ENCODE measurements at regions of chr2 and their contacts with region 1.

Region 1: DNA sequence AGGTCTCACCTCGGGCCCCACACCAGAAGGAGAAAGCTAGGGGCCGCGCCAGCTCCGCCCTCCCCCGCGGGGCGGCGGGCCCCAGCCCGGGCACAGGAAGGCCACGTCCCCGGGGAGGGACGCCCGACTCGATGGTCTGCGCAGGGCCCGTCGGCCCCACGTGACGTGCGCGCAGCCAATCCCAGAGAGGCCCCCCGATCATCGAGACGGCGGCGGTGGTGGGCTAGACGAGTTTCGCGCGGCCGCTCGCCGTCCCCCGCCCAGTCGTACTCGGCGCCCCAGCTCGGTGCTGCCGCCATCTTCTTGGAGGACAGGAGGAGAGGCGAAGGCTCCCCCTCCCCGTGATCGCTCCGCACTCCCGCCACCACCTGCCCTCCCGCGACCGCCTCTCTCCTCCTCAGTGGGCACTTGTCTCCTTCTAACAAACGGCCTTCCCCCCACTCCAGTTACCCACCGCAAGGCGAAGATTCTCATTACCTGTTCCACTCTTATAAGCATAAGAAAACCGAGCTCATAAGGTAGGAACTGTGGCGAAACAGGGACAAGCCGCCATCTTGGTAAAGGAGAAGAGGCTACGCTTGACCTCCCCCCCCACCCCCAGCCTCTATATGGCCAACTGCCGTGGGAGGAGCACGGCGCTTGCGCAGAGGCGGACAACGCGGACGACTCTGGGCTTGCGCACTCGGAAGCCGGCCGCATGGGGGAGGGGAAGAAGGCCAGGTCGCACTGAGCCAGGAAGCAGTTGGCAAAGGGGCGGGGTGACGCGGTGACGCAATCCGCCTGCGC is at the start of gene HDLBP:
- DNase-seq: peak; percentile 93 to 98
- H3K4me3 ChIP-seq: peak within 1 kb of the TSS; percentile 72 to 100 (median 97)
- H3K27ac ChIP-seq: peak within 1 kb of the TSS; percentile 100
- H3K4me1 ChIP-seq: peaks cover 0 to 6% (median 1%) of the 10 kb centered on the region in 4 experiments; a peak in 2 of 7 replicates
- H3K27me3 ChIP-seq: no peaks in the 10 kb centered on the region
- CTCF ChIP-seq: peak; percentile 23 to 72 (median 51); a peak in 3 of 4 replicates
- EP300 ChIP-seq: peak in 1 of 2 experiments; percentile 5; a peak in 1 of 3 replicates
- POLR2A ChIP-seq: peak; percentile 66 to 73
- RAD21 ChIP-seq: no peak
- total RNA-seq, gene HDLBP: 329 and 360 TPM in 2 replicates

Region 2: DNA sequence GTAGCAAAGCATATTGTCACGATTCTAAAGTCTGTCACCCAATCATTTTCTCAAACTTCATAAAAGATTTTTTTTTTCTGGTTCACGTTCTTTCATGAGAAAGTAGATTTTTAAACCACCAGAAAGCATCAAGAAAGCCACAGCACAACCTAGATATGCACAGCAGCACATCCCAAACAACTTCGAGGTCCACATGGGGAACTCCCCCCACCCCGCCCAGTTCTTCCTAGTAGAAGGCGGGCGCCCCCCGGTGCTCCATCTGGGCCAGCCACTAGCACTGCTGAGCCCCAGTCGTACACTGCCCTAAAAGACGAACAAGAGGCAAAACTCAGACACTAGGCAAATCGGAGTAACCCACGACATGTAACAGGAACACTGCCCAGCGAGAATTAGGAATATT is 15.3 kb before region 1 on chr2:
- CTCF ChIA-PET with region 1: interaction called, 5 read pairs
- POLR2A ChIA-PET with region 1: interaction called, 47 read pairs
- DNase-seq: no peak
- H3K4me3 ChIP-seq: no peak overlapping the region
- H3K27ac ChIP-seq: no peak overlapping the region
- H3K4me1 ChIP-seq: peaks cover 0 to 3% (median 1%) of the 10 kb centered on the region in 4 experiments; a peak in 2 of 7 replicates
- H3K27me3 ChIP-seq: no peaks in the 10 kb centered on the region
- CTCF ChIP-seq: peak in 1 of 3 experiments; percentile 7; a peak in 1 of 4 replicates
- EP300 ChIP-seq: no peak
- POLR2A ChIP-seq: no peak
- RAD21 ChIP-seq: peak in 1 of 2 experiments; percentile 33; a peak in 2 of 4 replicates

Region 3: DNA sequence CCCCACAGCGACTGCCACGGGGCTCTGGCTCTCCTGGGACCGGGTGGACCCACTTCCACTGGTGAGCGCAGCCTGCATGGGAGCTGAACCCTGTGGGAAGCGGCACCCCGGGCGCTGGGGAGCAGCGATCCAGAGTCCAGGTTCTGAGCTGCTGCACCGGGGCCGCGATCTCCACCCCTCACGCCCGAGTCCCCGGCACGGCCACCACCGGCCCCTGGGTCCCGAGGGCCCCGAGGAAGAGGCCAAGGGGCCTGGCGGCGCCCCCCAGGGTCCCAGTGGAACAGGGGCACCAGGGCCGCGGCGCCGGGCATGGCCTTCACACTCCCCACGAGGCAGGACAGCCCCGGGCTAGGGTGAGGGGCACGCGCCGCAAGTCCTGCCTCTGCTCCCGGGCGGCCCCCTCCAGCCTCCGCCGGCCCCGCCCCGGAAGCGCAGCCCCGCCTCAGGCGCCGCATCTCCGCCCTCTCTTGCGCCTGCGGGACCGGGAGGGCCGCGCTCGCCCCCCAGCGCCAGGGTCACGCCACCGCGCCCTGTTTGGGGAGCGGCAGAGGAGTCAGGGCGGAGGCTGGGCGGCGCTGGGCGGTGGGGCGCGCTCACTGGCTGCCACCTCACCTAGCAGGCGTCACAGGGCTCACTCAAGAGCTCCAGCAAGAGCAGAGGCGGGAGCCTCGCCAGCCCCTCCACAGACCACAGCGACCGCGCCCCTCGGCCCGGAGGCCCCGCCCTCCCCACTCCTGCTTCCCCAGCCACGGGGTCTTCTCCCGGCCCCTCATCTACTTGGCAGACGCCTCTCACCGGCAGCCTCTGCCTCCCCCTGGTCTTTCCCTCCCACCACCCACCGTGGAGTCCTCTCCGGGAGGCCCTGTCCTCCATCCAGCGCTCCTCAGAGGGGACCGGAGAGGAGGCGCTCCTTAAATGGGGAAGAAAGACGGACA is 294.8 kb after region 1 on chr2:
- CTCF ChIA-PET with region 1: no interaction called
- POLR2A ChIA-PET with region 1: interaction called, 10 read pairs
- DNase-seq: peak; percentile 80 to 96
- H3K4me3 ChIP-seq: peak overlapping the region; percentile 38 to 66 (median 60)
- H3K27ac ChIP-seq: peak overlapping the region; percentile 73; the same call in 1 of the 2 replicates
- H3K4me1 ChIP-seq: no peaks in the 10 kb centered on the region
- H3K27me3 ChIP-seq: no peaks in the 10 kb centered on the region
- CTCF ChIP-seq: peak; percentile 72 to 81 (median 79)
- EP300 ChIP-seq: peak in 1 of 2 experiments; percentile 89; a peak in 1 of 3 replicates
- POLR2A ChIP-seq: peak; percentile 43 to 62; a peak in 2 of 3 replicates
- RAD21 ChIP-seq: peak; percentile 57 to 72